ENCODE measurements at regions of chr3 and their contacts with region 1.

Region 1: GRCh38 chr3:48635222-48636021 is at the start of gene SLC26A6:
- DNase-seq: peak; percentile 99

Region 2: DNA sequence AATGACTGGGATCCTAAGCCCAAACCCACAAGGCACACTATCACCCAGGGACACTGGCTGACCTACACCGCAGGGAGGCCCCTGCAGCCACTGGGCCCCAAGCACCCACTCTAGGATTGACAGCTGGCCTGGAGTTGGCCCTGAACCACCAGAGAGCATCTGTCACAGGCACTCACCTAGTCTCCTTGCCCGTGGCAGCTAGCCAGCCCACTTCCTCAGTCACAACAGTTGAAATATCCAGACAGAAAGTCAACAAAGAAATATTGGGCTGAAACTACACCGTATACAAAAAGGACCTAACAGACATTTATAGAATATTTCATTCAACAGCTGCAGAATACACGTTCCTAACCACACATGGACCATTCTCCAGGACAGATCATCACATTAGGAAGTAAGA is 296.8 kb before region 1 on chr3:
- CTCF ChIA-PET with region 1: no interaction called
- POLR2A ChIA-PET with region 1: no interaction called
- DNase-seq: no peak

Region 3: DNA sequence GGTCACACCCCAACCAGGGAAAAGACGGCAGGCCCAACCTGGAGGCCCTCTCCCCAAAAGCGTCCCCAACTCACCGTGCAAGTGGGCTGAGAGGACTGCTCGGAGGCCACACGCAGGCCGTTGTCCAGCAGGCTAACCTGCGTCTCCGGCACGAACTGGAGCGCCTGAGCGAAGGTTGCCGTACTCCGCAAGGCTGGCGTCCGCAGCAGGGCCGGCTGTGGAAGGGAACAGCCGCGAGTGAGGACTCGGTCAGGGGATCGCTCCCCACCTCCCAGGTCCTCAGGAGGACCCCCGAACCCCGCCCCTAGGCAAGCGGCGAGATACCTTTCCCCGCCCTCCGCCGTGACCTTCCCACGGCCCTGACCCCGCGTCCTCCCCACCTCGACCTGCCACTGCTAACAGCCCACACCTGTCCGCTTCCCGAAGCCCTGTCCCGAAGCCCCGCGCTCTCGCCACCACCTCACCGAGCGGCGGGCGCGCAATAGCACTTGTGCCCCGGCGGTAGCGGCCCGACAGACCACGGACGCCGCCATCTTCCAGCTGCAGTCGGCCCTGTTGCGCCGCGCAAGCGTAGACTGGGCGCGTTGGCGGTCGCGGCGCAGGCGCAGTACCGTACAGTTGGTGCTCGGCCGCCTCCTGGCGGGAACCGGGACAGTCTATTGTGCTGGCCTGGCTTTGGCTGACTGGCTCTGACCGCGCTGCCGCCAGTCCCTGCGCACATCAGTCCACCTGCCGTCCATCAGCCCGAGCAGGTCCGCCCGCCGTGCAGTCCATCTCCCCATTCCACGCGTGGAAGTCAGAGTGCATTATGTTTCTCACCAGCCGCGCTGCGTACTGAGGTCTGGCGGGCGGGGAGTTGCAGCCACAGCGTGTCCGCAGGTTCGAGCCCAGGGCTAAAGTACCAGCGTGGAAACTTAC is 26.1 kb before region 1 on chr3 and contains the start of gene UQCRC1:
- CTCF ChIA-PET with region 1: interaction called, 8 read pairs
- POLR2A ChIA-PET with region 1: interaction called, 17 read pairs
- DNase-seq: peak; percentile 99

Measured in HEK293T (cell line).